HCT116 (cell line): ENCODE measurements at regions of chr5 and their contacts with region 1.

Region 1: DNA sequence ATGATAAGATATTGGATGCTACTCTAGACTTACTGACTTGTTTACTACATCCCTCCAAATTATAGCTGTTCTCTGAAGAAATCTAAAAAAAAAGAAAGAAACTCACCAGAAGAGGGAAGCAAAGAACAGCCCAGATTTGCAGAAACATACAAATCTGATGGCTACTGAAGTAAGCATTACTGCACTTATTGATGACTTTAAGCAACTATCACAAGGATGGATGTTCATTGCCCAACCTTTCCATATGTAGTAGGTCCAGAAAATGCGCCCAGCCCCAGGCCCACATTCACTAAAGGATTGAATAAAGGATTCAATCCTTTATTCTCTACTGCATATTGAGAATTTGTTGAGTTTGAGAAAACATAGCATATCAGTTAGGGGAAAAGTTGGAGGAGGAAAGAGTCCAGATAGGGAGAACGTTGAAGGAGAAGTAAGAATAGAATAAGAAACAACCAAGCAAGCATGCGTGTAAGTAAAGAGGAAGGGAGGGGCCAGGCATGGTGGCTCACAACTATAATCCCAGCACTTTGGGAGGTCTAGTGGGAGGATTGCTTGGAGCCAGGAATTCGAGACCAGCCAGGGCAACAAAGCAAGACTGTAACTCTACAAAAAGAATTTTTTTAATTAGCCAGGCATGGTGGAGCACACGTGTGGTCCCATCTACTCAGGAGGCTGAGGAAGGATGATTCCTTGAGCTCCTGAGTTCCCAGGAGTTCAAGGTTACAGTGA is 33.8 kb upstream of the DTWD2 start:
- DNase-seq: no peak
- ATAC-seq: peak; percentile 59
- H3K4me3 ChIP-seq: no peak overlapping the region
- H3K27ac ChIP-seq: no peak overlapping the region
- H3K4me1 ChIP-seq: no peaks in the 10 kb centered on the region
- H3K27me3 ChIP-seq: no peaks in the 10 kb centered on the region
- CTCF ChIP-seq: peak; percentile 30 to 78 (median 57); a peak in 4 of 6 replicates
- POLR2A ChIP-seq: no peak
- RAD21 ChIP-seq: peak; percentile 88

Region 2: GRCh38 chr5:119212676-119213075 is 190.5 kb after region 1 on chr5:
- CTCF ChIA-PET with region 1: no interaction called
- POLR2A ChIA-PET with region 1: no interaction called
- RAD21 ChIA-PET with region 1: no interaction called
- intact Hi-C with region 1: loop called (anchors 5 kb)
- DNase-seq: no peak
- ATAC-seq: no peak
- H3K4me3 ChIP-seq: no peak overlapping the region
- H3K27ac ChIP-seq: no peak overlapping the region
- H3K4me1 ChIP-seq: no peaks in the 10 kb centered on the region
- H3K27me3 ChIP-seq: no peaks in the 10 kb centered on the region
- CTCF ChIP-seq: no peak
- POLR2A ChIP-seq: no peak
- RAD21 ChIP-seq: no peak

Region 3: GRCh38 chr5:119335261-119335677 is 313.1 kb after region 1 on chr5:
- CTCF ChIA-PET with region 1: interaction called, 9 read pairs
- POLR2A ChIA-PET with region 1: interaction called, 3 read pairs
- RAD21 ChIA-PET with region 1: no interaction called
- intact Hi-C with region 1: loop called (anchors 1 kb)
- DNase-seq: no peak
- ATAC-seq: peak; percentile 25; the same call in 1 of the 2 replicates
- H3K4me3 ChIP-seq: no peak overlapping the region
- H3K27ac ChIP-seq: no peak overlapping the region
- H3K4me1 ChIP-seq: no peaks in the 10 kb centered on the region; a peak in 1 of 4 replicates
- H3K27me3 ChIP-seq: no peaks in the 10 kb centered on the region
- CTCF ChIP-seq: no peak
- POLR2A ChIP-seq: no peak
- RAD21 ChIP-seq: no peak